Prostate gland (tissue), 2 donors: ENCODE measurements at regions of chr2 and their contacts with region 1.

Region 1: GRCh38 chr2:131419441-131419840 is 55.5 kb upstream of the RAB6D start:
- DNase-seq: no peak
- H3K4me3 ChIP-seq: no peak overlapping the region
- H3K27ac ChIP-seq: no peak overlapping the region
- H3K4me1 ChIP-seq: no peaks in the 10 kb centered on the region
- H3K27me3 ChIP-seq: no peaks in the 10 kb centered on the region
- CTCF ChIP-seq: no peak
- POLR2A ChIP-seq: no peak

Region 2: GRCh38 chr2:131520526-131520925 is 101.1 kb after region 1 on chr2:
- intact Hi-C with region 1: no loop called
- DNase-seq: no peak
- H3K4me3 ChIP-seq: no peak overlapping the region
- H3K27ac ChIP-seq: no peak overlapping the region
- H3K4me1 ChIP-seq: no peaks in the 10 kb centered on the region
- H3K27me3 ChIP-seq: no peaks in the 10 kb centered on the region
- CTCF ChIP-seq: no peak
- POLR2A ChIP-seq: no peak

Region 3: DNA sequence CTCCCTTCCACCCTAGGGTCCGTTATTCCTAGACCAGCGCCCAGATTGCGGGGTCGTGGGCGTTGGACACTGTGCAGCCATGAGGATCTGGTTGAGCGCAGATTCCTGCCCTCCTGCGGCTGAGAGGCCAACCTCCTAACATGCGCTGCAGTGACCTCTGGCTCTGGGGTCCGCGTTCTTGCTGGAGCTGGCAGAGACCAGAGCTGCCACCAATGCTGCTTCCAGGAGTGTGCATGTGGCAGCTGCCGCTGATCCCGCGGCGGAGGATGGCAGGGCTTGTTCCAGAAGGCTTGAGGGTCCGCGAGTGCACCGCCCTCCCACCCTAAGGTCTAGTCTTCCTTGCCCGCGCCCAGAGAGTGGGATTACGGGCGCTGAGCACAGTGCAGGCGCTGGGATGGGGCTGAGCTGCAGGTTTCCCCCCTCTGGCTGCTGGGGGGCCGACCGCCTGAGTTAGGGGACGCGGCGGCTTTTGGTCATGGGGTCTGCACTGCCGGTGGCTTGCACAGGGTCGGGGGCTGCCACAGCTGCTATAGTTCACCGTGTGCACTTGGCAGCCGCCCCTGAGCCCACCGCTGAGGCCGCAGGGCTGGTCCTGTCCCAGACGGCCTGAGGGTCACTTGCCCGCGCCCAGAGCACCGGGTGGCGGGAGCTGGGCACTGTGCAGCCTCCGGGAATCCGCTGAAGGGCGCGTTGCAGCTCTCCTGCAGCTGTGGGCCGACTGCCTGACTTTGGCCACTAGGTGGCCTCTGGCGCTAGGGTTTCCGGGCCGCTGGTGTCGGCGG is 254.1 kb after region 1 on chr2:
- intact Hi-C with region 1: loop called (anchors 5 kb)
- DNase-seq: peak; percentile 75
- H3K4me3 ChIP-seq: peak overlapping the region; percentile 19 to 29
- H3K27ac ChIP-seq: no peak overlapping the region
- H3K4me1 ChIP-seq: peaks cover 8% of the 10 kb centered on the region
- H3K27me3 ChIP-seq: no peaks in the 10 kb centered on the region
- CTCF ChIP-seq: peak; percentile 60 to 88 (median 84)
- POLR2A ChIP-seq: no peak